ENCODE measurements at regions of chr17 and their contacts with region 1.

Region 1: DNA sequence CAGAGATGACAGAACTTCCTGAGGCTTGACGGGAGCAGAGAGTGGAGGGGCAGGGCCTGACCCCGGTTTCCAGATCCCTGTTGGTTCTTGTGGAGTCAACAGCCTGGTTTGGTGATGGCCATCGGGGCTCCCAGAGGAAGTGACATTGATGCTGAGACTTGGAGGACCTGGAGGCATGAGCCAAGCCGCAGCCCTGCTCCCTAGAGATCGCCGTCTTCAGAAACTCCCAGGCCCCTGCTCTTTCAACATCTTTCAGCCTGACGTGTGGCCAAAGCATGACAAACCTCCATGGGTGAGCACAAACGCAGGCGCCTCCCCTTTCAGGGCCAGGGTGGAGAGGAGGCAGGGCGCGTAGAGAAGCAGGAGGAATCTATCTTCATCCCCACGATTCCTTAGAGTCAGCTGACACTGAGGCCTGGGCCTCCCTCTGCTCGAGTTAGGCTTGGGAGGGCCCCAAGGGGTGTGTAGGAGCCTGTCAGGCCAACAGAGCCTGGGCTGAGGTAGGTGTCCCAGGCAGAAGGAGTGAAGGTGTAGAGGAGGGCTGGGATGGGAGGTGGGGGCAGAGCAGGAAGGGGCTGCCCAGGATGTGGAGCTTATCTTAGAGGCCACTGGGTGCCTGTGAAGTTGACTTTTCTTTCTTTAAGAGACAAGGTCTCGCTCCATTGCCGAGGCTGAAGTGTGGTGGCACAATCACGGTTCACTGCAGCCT is 56.1 kb upstream of the MED9 start:
- DNase-seq: no peak
- H3K4me3 ChIP-seq: no peak overlapping the region
- H3K27ac ChIP-seq: peak overlapping the region; percentile 17 to 80 (median 64)
- H3K4me1 ChIP-seq: peaks cover 0 to 18% (median 11%) of the 10 kb centered on the region in 6 donors
- H3K27me3 ChIP-seq: no peaks in the 10 kb centered on the region
- CTCF ChIP-seq: no peak
- POLR2A ChIP-seq: no peak

Region 2: DNA sequence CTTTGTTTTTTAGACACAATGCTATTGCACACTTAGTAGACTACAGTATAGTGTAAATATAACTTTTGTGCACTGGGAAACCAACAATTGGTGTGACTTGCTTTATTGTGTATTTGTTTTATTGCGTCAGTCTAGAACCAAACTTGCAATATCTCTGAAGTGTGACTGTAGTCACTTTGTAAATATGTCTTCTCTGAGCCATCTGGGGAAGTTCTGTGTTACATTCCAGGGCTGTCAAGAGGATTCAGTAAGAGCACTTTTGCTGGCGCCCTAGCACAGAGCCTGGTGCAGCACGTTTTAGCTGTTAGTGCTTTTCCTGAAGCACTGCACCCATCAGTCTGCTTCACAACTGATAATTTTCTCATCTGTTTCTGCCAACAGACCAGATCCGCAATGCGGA is 44.4 kb before region 1 on chr17:
- intact Hi-C with region 1: loop called (anchors 5 kb)
- DNase-seq: peak; percentile 36
- H3K4me3 ChIP-seq: no peak overlapping the region
- H3K27ac ChIP-seq: peak overlapping the region in 4 of 8 donors; percentile 11 to 43 (median 39)
- H3K4me1 ChIP-seq: no peaks in the 10 kb centered on the region
- H3K27me3 ChIP-seq: peaks cover 0 to 5% (median 0%) of the 10 kb centered on the region in 7 donors
- CTCF ChIP-seq: no peak
- POLR2A ChIP-seq: no peak

Measured in spleen (tissue), 13 donors.